ENCODE measurements at regions of chr19 and their contacts with region 1.

Region 1: DNA sequence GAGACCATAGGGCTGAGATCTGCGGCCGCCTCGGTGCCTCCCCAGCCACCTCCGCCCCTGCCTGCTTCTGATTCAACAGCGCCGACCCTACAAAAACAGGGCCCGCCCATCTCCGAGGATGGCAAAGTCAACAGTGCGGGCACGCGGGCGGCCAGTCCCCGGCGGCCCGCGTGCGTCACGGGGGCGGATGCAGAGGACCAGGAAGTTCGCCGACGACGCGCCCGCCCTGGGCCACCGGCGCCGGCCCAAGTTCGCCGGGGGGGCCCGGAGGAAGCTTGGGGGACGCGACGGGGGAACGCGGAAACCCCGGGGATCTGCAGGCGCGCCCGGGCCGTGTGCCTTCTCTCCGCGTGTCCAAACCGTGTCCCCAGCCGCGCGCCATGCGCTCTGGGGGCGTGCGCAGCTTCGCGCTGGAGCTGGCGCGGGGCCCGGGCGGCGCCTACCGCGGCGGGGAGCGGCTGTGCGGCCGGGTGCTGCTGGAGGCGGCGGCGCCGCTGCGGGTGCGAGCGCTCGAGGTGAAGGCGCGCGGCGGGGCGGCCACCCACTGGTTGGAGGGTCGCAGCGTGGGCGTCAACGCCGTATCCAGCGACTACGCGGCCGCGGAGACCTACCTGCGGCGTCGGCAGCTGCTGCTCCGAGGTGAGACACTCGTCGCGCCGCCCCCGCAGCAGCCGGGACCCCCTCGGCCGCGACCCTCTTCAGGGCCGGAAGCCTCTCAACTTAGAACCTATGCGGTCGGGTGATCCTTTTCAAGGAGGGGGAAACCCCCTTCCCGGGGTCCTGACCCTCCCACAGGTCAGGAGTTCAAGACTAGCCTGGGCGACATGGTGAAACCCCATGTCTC is 6.8 kb upstream of the ARRDC2 start:
- DNase-seq: peak; percentile 93 to 99
- H3K4me3 ChIP-seq: peak overlapping the region; percentile 72 to 80
- H3K27ac ChIP-seq: peak overlapping the region; percentile 88 to 95
- H3K4me1 ChIP-seq: peaks cover 4 to 10% of the 10 kb centered on the region in 2 donors
- H3K27me3 ChIP-seq: no peaks in the 10 kb centered on the region
- CTCF ChIP-seq: no peak

Region 2: GRCh38 chr19:17938092-17938845 is 62.9 kb before region 1 on chr19:
- intact Hi-C with region 1: loop called (anchors 1 kb)
- DNase-seq: peak in 1 of 2 donors; percentile 87
- H3K4me3 ChIP-seq: no peak overlapping the region
- H3K27ac ChIP-seq: no peak overlapping the region
- H3K4me1 ChIP-seq: peaks cover 4 to 7% of the 10 kb centered on the region in 2 donors
- H3K27me3 ChIP-seq: no peaks in the 10 kb centered on the region
- CTCF ChIP-seq: peak; percentile 87 to 95 (median 90)

Region 3: DNA sequence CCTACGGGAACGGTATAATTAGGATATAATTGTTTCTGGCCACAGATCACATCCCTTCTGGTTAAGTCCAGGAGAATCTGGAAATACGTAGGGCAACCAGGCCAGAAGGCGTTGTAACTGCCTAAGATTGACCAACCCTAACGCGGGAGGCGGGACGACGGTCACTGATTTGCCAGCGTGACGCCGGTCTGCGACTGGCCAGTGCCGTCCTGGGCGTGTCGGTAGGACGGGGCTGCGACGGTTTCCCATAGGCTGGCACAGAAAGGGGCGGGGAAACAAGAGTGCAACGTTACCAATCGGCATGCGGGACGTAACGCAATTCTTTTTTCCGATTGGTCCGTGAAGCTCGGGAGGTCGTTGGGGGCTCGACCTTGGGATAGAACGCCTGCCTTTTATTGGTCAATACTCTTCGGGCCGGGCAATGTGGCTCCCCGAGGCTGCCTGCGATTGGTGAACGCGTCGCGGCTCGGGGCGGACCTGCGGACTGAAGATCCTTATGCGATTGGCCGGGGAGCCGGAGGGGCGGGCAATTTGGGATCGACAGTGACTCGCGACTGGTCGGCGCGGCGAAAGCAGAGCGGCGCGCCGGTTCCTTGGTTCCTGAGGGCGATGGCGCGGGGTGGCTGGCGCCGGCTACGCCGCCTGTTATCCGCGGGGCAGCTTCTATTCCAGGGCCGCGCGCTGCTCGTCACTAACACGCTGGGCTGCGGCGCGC is 191.7 kb after region 1 on chr19 and contains the start of gene MPV17L2:
- intact Hi-C with region 1: no loop called
- DNase-seq: peak; percentile 98 to 100
- H3K4me3 ChIP-seq: peak within 1 kb of the TSS; percentile 84 to 96
- H3K27ac ChIP-seq: peak within 1 kb of the TSS; percentile 87 to 92
- H3K4me1 ChIP-seq: peaks cover 10 to 11% of the 10 kb centered on the region in 2 donors
- H3K27me3 ChIP-seq: no peaks in the 10 kb centered on the region
- CTCF ChIP-seq: no peak
- total RNA-seq, gene MPV17L2: 9.5 TPM